T-cell (primary cell): ENCODE measurements at regions of chr7 and their contacts with region 1.

Region 1: DNA sequence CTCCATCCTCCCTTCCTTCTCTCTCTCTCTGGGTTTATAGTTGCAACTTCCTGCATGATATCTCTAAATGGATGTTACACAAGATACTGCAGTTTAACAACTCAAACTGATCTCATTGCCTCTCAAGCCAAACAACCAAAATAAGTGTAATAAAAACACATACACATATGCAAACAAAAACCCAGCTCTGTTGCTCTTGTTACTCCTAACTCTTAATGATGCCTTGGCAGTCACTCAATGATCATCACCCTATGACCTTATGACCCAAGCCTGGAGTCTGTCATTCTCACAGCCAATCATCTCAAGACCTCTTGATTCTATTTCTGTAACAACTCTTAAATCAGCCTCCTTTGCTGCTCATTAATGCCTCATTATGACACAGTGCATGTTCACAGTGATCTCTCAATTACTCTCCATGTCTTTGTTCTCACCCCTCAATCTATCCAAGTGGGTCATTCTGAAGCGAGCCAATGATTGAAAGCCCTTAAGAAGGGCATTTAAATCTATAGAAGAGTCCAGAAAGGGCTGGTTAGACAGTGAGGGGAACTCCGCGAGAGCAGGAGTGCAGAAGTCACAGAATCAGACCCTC is 210.9 kb downstream of the INHBA start:
- DNase-seq: no peak
- ATAC-seq: no peak
- H3K4me3 ChIP-seq: no peak overlapping the region
- H3K4me3 Mint-ChIP-seq: no peak overlapping the region
- H3K27ac ChIP-seq: no peak overlapping the region
- H3K27ac Mint-ChIP-seq: no peak overlapping the region
- H3K4me1 ChIP-seq: no peaks in the 10 kb centered on the region
- H3K4me1 Mint-ChIP-seq: no peaks in the 10 kb centered on the region
- H3K27me3 ChIP-seq: no peaks in the 10 kb centered on the region
- H3K27me3 Mint-ChIP-seq: no peaks in the 10 kb centered on the region

Region 2: GRCh38 chr7:39926111-39926510 is 1565.9 kb before region 1 on chr7:
- CTCF ChIA-PET with region 1: no interaction called
- POLR2A ChIA-PET with region 1: interaction called in 1 of 2 experiments, 11 read pairs
- DNase-seq: no peak
- ATAC-seq: no peak
- H3K4me3 ChIP-seq: no peak overlapping the region
- H3K4me3 Mint-ChIP-seq: no peak overlapping the region
- H3K27ac ChIP-seq: no peak overlapping the region
- H3K27ac Mint-ChIP-seq: no peak overlapping the region
- H3K4me1 ChIP-seq: no peaks in the 10 kb centered on the region
- H3K4me1 Mint-ChIP-seq: no peaks in the 10 kb centered on the region
- H3K27me3 ChIP-seq: peaks cover 0 to 3% of the 10 kb centered on the region in 2 experiments
- H3K27me3 Mint-ChIP-seq: peaks cover 0 to 2% of the 10 kb centered on the region in 2 donors

Region 3: GRCh38 chr7:40587419-40587818 is 904.6 kb before region 1 on chr7:
- CTCF ChIA-PET with region 1: no interaction called
- POLR2A ChIA-PET with region 1: no interaction called
- DNase-seq: no peak
- ATAC-seq: no peak
- H3K4me3 ChIP-seq: no peak overlapping the region
- H3K4me3 Mint-ChIP-seq: no peak overlapping the region
- H3K27ac ChIP-seq: no peak overlapping the region
- H3K27ac Mint-ChIP-seq: no peak overlapping the region
- H3K4me1 ChIP-seq: no peaks in the 10 kb centered on the region
- H3K4me1 Mint-ChIP-seq: no peaks in the 10 kb centered on the region
- H3K27me3 ChIP-seq: no peaks in the 10 kb centered on the region
- H3K27me3 Mint-ChIP-seq: no peaks in the 10 kb centered on the region

Region 4: DNA sequence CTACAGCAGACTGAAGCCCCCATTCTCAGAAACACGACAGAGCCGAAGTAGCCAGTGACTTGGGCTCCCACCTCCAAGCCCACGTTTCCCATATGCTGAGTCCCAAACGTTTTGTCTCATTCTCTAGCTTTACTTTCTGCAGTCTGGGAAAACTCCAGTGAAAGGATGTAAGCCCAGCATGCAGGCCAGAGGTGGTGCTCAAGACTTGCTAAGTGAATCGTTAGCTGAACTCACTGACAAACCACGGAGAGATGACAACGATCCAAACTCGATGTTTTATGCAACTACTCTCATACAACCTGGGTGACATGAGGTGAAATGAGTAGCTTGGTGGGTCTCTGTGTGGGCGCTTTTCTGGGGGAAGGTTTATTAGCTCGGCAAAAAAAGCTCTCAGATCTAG is 625.4 kb before region 1 on chr7:
- CTCF ChIA-PET with region 1: no interaction called
- POLR2A ChIA-PET with region 1: no interaction called
- DNase-seq: no peak
- ATAC-seq: no peak
- H3K4me3 ChIP-seq: no peak overlapping the region
- H3K4me3 Mint-ChIP-seq: no peak overlapping the region
- H3K27ac ChIP-seq: no peak overlapping the region
- H3K27ac Mint-ChIP-seq: no peak overlapping the region
- H3K4me1 ChIP-seq: no peaks in the 10 kb centered on the region
- H3K4me1 Mint-ChIP-seq: no peaks in the 10 kb centered on the region
- H3K27me3 ChIP-seq: no peaks in the 10 kb centered on the region
- H3K27me3 Mint-ChIP-seq: no peaks in the 10 kb centered on the region